ENCODE measurements at regions of chr15 and their contacts with region 1.

Region 1: DNA sequence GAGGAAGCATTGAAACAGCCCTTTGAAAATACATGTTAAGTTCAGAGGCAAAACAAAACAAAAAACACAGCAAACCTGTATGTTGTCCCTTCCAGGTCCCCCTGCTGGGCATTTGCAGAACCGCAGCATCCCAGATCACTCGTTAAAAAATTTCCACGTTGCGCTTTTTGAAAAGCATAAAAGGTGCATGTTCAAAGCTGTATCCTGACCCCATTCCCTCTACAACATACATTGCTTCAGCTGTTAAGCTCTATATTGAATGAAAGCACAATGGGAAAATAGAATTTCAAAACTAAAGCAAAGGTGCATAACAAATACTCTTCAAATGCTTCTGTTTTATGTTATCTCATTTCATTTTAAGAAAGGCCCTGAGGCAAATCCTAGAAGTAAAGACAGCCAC is 328.3 kb downstream of the THSD4 start:
- DNase-seq: no peak
- H3K4me3 ChIP-seq: no peak overlapping the region
- H3K27me3 ChIP-seq: no peaks in the 10 kb centered on the region
- CTCF ChIP-seq: peak; percentile 87

Region 2: DNA sequence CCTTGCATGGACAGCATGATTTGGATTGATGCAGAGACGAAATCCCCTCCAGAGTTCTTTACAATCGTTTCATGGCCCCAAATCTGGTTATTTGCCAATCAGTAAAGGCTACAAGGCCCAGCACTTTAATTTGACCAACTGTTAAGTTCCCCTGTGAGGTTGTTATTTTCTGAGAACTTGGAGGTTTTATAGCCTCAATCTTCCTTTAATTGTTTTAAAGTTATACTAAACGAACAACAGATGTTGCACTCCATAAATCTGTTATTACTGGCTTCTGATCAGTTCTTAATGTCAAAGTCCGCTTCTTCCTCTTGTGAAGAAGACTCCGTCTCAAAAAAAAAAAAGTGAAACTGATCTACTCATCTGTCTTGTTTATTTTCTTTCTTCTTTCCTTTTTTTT is 620.3 kb before region 1 on chr15:
- CTCF ChIA-PET with region 1: no interaction called
- POLR2A ChIA-PET with region 1: no interaction called
- DNase-seq: no peak
- H3K4me3 ChIP-seq: no peak overlapping the region
- H3K27me3 ChIP-seq: no peaks in the 10 kb centered on the region
- CTCF ChIP-seq: no peak

Region 3: GRCh38 chr15:70892002-70892914 is 551.3 kb before region 1 on chr15 and contains the starts of genes LRRC49 and THAP10:
- CTCF ChIA-PET with region 1: interaction called, 11 read pairs
- POLR2A ChIA-PET with region 1: no interaction called
- DNase-seq: peak; percentile 93
- H3K4me3 ChIP-seq: peak within 1 kb of the TSS; percentile 81
- H3K27me3 ChIP-seq: no peaks in the 10 kb centered on the region
- CTCF ChIP-seq: no peak
- polyA plus RNA-seq, gene LRRC49: 6.2 and 8.6 TPM in 2 replicates
- polyA plus RNA-seq, gene THAP10: 2.8 and 3.8 TPM in 2 replicates

Region 4: GRCh38 chr15:71011503-71012155 is 431.9 kb before region 1 on chr15:
- CTCF ChIA-PET with region 1: interaction called, 17 read pairs
- POLR2A ChIA-PET with region 1: no interaction called
- DNase-seq: peak; percentile 22
- H3K4me3 ChIP-seq: no peak overlapping the region
- H3K27me3 ChIP-seq: no peaks in the 10 kb centered on the region
- CTCF ChIP-seq: peak; percentile 81

Region 5: DNA sequence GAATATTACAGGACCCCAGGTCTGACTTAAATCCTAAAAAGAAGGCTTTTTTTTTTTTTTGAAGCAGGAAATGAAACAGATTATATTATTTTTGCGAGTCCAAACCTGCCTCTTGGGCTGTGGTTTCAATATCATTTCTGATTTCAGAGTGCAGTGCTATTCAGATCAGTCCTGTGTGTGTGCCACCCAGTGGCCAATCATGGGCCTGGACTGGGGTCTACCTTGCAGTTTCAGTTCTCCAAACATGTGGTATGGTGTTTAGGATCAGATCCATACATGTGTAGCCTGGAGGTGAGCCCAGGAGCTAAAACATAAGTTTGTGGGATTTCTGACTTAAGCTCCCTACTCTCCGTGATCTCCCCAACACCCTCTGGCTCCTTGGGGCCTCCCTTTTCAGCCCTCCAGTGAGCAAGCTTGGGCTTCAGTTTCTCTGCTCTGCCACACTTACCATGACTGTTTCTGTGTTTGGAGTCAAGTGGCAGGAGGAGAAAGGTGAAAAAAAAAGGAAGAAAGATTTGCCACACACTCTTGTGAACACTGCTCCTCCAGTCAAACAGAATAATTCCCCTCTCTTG is 340.3 kb before region 1 on chr15:
- CTCF ChIA-PET with region 1: interaction called, 32 read pairs
- POLR2A ChIA-PET with region 1: no interaction called
- DNase-seq: no peak
- H3K4me3 ChIP-seq: no peak overlapping the region
- H3K27me3 ChIP-seq: no peaks in the 10 kb centered on the region
- CTCF ChIP-seq: peak; percentile 71

Region 6: GRCh38 chr15:71109130-71109529 is 334.4 kb before region 1 on chr15:
- CTCF ChIA-PET with region 1: interaction called, 49 read pairs
- POLR2A ChIA-PET with region 1: interaction called, 3 read pairs
- DNase-seq: peak; percentile 51
- H3K4me3 ChIP-seq: no peak overlapping the region
- H3K27me3 ChIP-seq: no peaks in the 10 kb centered on the region
- CTCF ChIP-seq: peak; percentile 49

Region 7: GRCh38 chr15:71114896-71115554 is 328.5 kb before region 1 on chr15 and contains the start of gene THSD4:
- CTCF ChIA-PET with region 1: interaction called, 49 read pairs
- POLR2A ChIA-PET with region 1: no interaction called
- DNase-seq: no peak
- H3K4me3 ChIP-seq: peak within 1 kb of the TSS; percentile 75
- H3K27me3 ChIP-seq: no peaks in the 10 kb centered on the region
- CTCF ChIP-seq: peak; percentile 99
- polyA plus RNA-seq, gene THSD4: 13.4 and 18.8 TPM in 2 replicates

Region 8: DNA sequence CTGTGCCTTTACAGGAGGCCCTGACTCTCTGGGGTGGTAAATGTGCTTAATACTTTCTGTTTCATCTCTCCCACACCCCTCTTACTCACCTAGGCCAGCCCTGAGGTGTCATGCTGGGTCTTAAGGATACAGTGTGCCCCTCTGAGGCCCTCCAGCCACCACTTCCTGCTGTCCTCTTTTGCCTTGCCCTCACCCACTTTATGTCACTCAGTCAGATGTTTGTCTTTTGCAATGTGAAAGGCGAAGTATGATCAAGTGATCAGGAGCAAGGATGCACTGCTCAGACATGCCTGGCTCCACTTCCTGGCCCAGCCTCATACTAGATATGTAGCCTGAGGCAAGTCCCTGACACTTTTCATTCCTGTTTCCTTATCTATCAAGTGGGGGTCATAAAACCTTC is 27.8 kb after region 1 on chr15:
- CTCF ChIA-PET with region 1: no interaction called
- POLR2A ChIA-PET with region 1: no interaction called
- DNase-seq: no peak
- H3K4me3 ChIP-seq: no peak overlapping the region
- H3K27me3 ChIP-seq: no peaks in the 10 kb centered on the region
- CTCF ChIP-seq: no peak

Region 9: GRCh38 chr15:71508081-71508682 is 64.6 kb after region 1 on chr15:
- CTCF ChIA-PET with region 1: no interaction called
- POLR2A ChIA-PET with region 1: no interaction called
- DNase-seq: no peak
- H3K4me3 ChIP-seq: no peak overlapping the region
- H3K27me3 ChIP-seq: no peaks in the 10 kb centered on the region
- CTCF ChIP-seq: no peak

Region 10: DNA sequence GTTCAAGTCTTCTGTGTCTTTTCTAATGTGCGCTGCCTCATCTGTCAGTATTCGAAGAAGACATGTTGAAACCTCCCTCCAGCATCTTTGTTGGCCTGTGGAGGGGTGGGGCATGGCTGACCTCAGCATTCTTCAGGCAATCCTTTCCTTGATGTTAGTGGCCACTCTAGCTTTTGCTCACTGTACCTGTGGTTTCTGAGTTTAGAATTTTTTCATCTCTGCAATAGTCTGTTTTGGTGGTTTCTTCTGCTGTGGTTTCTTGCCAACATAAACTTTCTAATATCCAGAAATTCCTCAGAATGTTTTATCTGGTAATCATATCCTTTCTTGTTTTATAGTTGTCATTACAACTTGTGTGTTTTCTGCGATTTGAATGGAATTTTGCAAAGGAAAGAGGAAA is 115.6 kb after region 1 on chr15:
- CTCF ChIA-PET with region 1: no interaction called
- POLR2A ChIA-PET with region 1: no interaction called
- DNase-seq: peak; percentile 69
- H3K4me3 ChIP-seq: no peak overlapping the region
- H3K27me3 ChIP-seq: no peaks in the 10 kb centered on the region
- CTCF ChIP-seq: no peak

Region 11: DNA sequence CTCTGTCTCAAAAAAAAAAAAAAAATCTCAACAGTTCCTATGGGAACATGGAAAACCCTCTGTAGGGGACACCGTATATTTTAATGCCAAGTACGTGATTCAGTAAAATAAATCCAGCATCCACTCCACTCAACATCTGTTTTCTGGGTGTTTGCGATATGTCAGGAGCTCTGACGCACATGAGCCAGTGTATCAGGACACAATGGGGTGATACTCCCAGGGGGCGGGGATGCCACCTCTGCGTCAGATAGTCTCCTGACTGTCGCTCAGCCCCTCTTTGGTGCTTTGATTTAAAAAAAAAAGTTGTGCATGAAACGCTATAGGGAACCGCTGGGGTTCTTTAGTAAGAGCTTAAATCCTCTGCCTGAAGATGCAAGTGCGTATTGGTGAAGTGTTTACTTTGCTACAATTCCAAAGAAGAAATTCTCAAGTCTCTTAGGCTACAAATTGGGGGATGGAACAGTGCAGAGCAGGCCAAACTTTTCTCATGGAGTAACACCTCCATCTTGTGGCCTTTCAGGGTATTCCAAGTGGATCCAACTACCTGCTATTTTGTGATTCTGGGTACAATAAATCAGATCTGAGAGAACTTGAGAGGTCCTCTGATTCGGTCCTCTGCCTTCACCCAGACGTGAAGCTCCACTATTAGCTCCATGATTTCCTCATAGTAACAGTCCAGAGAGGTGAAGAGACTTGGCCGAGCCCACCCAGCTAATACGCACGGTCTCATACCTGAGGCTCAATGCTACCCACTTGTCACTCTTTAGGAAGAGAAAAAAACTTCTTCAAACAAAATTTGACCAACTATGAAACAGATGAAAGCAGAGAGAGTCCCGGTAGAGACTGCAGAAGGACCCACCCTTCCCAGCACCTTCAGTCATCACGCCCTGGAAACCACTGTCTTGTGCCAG is 357.6 kb after region 1 on chr15:
- CTCF ChIA-PET with region 1: interaction called, 19 read pairs
- POLR2A ChIA-PET with region 1: no interaction called
- DNase-seq: no peak
- H3K4me3 ChIP-seq: no peak overlapping the region
- H3K27me3 ChIP-seq: no peaks in the 10 kb centered on the region
- CTCF ChIP-seq: peak; percentile 83